OCI-LY7 (cell line): ENCODE measurements at regions of chr6 and their contacts with region 1.

Region 1: GRCh38 chr6:150702675-150703074 is 103.0 kb downstream of the PLEKHG1 start:
- DNase-seq: no peak
- H3K4me3 ChIP-seq: no peak overlapping the region
- H3K27ac ChIP-seq: no peak overlapping the region
- H3K4me1 ChIP-seq: peaks cover 56% of the 10 kb centered on the region
- CTCF ChIP-seq: no peak

Region 2: DNA sequence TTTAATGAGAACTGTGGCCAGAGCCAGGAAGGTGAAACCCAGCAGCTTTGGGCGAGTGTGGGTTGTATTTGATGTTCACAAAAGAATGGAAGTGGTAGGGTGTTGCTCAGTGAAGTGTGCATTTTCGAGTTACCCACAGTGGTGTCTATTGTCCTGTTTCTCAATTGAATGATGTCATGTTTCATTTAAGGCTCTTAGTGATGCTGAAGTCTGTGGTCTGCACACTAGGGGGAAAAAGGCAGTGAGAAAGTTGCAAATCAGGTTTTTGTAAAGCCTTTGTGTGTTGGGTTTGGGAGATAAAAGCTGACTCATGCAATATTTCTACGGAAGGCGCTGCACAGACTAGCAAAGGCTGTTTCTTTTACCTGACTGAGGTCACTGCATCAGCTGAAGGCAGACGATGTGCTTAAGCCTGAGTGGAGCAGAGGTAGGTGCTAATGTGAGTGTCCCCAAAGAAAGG is 18.1 kb after region 1 on chr6:
- CTCF ChIA-PET with region 1: interaction called, 3 read pairs
- POLR2A ChIA-PET with region 1: interaction called, 13 read pairs
- intact Hi-C with region 1: loop called (anchors 2 kb)
- DNase-seq: peak; percentile 84
- H3K4me3 ChIP-seq: peak overlapping the region; percentile 53
- H3K27ac ChIP-seq: peak overlapping the region; percentile 54
- H3K4me1 ChIP-seq: peaks cover 66% of the 10 kb centered on the region
- CTCF ChIP-seq: 0 out of 2 replicates have a peak, but pooled peaks have one; percentile 34

Region 3: GRCh38 chr6:150915880-150916265 is 213.2 kb after region 1 on chr6:
- CTCF ChIA-PET with region 1: no interaction called
- POLR2A ChIA-PET with region 1: no interaction called
- intact Hi-C with region 1: no loop called
- DNase-seq: no peak
- H3K4me3 ChIP-seq: no peak overlapping the region
- H3K27ac ChIP-seq: no peak overlapping the region
- H3K4me1 ChIP-seq: no peaks in the 10 kb centered on the region
- CTCF ChIP-seq: no peak